CD4-positive, alpha-beta T cell (primary cell): ENCODE measurements at regions of chr19 and their contacts with region 1.

Region 1: DNA sequence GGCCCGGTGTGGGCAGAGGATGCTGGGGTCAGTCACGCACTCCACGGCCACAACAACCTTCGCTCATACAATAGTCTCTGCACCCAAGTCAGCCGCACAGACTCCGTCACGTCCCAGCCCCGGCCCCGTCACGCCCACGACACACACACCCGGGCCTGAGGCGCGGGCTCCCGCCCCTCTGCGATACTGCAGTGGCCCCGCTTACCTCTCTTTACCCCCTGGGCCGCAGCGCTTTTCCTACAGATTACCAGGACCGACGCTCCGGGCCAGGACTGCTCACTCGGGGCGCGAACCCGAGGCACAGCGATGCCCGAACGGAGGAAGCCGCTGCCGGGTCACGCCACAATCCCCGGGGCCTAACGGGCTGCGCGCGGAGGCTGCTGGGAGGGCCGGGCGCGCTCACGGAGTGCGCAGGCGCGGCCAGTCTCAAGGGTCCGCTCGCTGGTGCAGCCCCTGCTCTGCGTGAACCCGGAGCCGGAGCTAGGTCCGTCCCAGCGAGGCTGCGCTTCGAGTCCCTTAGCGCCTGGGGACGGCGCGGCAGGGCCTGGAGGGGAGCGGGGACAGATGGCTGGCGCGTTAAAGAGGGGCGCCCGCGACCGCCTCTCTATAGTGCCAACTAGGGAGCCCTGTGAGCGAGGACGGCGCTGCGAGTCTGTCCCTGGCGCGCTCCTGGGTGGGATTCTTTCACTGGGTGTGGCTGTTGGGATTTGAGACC is at the start of gene ZFP82:
- DNase-seq: peak; percentile 54 to 86 (median 70)
- ATAC-seq: peak; percentile 86
- H3K4me3 ChIP-seq: peak within 1 kb of the TSS; percentile 93
- H3K4me3 Mint-ChIP-seq: peak within 1 kb of the TSS; percentile 95
- H3K27ac ChIP-seq: peak within 1 kb of the TSS; percentile 51 to 78
- H3K27ac Mint-ChIP-seq: peak within 1 kb of the TSS; percentile 93
- H3K4me1 ChIP-seq: peaks cover 19% of the 10 kb centered on the region
- H3K4me1 Mint-ChIP-seq: peaks cover 27% of the 10 kb centered on the region
- H3K27me3 ChIP-seq: peaks cover 16 to 23% of the 10 kb centered on the region in 2 experiments
- H3K27me3 Mint-ChIP-seq: peaks cover 29% of the 10 kb centered on the region
- CTCF ChIP-seq: no peak
- total RNA-seq, gene ZFP82: 3.4 to 3.8 TPM

Region 2: DNA sequence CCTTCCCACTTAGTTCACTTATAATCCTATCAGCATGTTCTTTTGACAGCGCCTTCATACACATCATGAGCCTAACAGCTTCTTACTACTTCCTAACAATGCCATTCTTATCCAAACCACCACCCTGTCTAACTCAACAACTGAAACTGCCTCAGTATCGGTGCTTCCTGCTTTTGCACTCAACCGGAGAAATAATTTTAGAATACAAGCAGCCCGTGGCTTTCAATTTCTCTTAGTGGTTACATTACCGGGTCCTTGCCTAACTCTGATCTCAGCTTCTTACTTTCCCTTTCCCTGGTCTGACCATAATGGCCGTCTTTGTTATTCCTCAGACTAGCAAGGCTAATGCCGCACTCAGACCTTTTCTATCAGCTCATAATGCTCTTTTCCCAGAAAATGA is 17.0 kb before region 1 on chr19:
- CTCF ChIA-PET with region 1: no interaction called
- POLR2A ChIA-PET with region 1: no interaction called
- intact Hi-C with region 1: loop called in 1 of 2 experiments (anchors 1 kb)
- DNase-seq: no peak
- ATAC-seq: no peak
- H3K4me3 ChIP-seq: no peak overlapping the region
- H3K4me3 Mint-ChIP-seq: no peak overlapping the region
- H3K27ac ChIP-seq: no peak overlapping the region
- H3K27ac Mint-ChIP-seq: no peak overlapping the region
- H3K4me1 ChIP-seq: no peaks in the 10 kb centered on the region
- H3K4me1 Mint-ChIP-seq: no peaks in the 10 kb centered on the region
- H3K27me3 ChIP-seq: no peaks in the 10 kb centered on the region
- H3K27me3 Mint-ChIP-seq: no peaks in the 10 kb centered on the region
- CTCF ChIP-seq: no peak